ENCODE measurements at regions of chr12 and their contacts with region 1.

Region 1: DNA sequence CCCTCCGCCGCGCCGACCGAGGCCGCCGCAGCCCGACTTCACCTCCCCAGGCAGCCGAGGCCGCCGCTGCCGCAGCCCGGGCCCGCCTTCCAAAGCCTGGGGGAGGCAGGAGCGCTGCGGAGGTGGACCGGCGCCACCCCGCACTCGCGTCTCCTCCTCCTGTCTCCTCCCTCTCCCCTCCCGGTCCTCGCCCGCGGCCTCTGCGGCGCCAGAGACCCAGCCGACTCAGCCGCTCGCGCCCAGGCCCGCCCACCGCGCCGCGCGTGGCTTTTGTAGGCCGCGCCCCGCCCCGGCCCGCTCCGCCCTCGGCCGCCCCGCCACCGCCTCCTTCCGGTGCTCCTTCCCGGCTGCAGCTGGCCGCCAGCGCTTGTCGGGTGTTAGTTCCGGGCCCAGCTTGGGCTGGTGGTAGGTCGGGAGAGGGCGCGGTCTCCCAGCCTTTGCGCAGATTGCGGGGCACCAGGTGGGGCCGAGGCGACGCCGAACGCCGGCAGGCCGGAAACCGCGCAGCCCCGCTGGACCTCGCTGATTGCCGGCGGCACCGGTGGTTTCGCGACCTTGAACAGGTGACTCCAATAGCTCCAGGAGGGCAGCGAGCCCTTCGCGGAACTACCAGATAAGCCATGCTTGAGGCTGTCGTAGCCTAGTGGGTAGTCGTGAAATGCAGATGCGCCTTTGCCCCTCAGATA is at the start of gene CAPRIN2:
- DNase-seq: peak; percentile 94 to 98
- H3K4me3 ChIP-seq: peak within 1 kb of the TSS; percentile 78 to 96
- H3K27ac ChIP-seq: peak within 1 kb of the TSS; percentile 78 to 85
- H3K4me1 ChIP-seq: peaks cover 0 to 21% (median 10%) of the 10 kb centered on the region in 4 donors
- H3K27me3 ChIP-seq: no peaks in the 10 kb centered on the region
- CTCF ChIP-seq: peak; percentile 26 to 29

Region 2: GRCh38 chr12:30345744-30346471 is 408.9 kb before region 1 on chr12:
- intact Hi-C with region 1: no loop called
- DNase-seq: no peak
- H3K4me3 ChIP-seq: no peak overlapping the region
- H3K27ac ChIP-seq: no peak overlapping the region
- H3K4me1 ChIP-seq: no peaks in the 10 kb centered on the region
- H3K27me3 ChIP-seq: no peaks in the 10 kb centered on the region
- CTCF ChIP-seq: no peak

Region 3: DNA sequence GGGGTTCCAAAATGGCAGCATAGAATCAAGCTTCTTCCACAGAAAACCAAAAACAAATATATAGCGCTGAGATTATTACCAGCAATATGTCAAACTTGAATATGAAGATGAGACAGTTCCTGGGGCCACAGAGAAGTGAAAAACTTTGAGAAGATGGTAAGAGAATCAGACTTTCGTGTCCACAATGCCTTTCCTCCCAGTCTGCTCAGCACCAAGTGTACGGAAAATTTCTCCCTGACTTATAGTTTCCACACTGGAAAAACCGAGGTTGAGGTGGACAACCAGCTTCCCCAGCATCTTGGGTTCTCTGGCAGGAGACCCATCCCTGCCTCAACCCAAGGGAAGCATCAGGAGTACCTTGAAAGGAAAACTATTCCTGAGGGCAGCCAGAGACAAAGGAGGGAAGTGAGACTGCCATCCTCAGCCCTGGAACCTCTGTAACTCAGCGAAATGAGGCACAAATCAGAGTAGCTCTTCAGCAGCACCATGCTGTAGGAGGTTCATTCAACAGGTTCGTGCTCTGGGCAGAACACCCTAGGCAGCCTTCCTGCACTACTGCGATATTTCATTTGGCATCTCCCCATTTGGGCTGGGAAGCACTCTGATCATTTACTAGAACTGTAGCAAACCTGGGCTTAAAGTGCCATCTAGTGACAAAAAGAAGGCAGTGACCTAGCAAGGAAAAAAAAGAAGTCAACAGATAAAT is 52.3 kb after region 1 on chr12:
- intact Hi-C with region 1: loop called (anchors 2 kb)
- DNase-seq: no peak
- H3K4me3 ChIP-seq: no peak overlapping the region
- H3K27ac ChIP-seq: no peak overlapping the region
- H3K4me1 ChIP-seq: peaks cover 0 to 5% (median 0%) of the 10 kb centered on the region in 4 donors
- H3K27me3 ChIP-seq: no peaks in the 10 kb centered on the region
- CTCF ChIP-seq: peak; percentile 77 to 84

Region 4: DNA sequence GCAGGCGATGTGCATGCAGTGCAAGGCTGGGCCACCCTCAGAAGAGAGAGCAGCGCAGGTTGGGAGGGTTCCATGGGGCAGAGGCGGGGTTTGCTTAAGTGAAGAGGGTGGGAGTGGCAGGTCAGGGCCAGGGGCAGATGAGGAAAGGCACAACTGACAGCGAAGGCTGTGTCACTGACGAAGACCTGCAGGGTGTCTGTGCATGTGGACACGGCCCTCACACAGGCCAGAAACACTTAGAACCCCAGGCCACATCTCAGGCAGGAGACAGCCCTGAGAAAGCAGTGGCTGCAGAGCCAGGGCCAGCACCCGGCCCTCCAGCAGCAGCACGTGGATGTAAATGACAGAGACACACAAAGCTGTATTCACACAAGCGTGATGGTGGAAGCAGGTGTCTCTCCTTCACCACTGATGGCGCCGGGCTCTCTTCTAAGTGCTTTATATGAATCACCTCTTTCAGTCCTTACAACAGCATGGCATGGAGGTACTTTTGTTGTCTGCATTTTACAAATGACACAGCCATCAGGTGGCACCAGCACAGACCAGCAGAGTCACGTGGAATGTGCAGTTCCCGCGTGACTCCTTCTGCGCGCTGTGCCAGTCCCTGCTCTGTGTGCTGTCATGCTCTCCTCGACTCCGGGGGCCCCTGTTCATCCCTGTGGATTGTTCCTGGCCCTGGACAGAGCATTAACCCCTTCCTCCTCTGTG is 226.3 kb after region 1 on chr12:
- intact Hi-C with region 1: no loop called
- DNase-seq: no peak
- H3K4me3 ChIP-seq: no peak overlapping the region
- H3K27ac ChIP-seq: no peak overlapping the region
- H3K4me1 ChIP-seq: no peaks in the 10 kb centered on the region
- H3K27me3 ChIP-seq: peaks cover 0 to 6% of the 10 kb centered on the region in 2 donors
- CTCF ChIP-seq: no peak

Measured in tibial artery (tissue), 4 donors.